ENCODE measurements at regions of chr3 and their contacts with region 1.

Region 1: GRCh38 chr3:140035871-140036270 is 100.9 kb downstream of the CLSTN2 start:
- DNase-seq: no peak
- ATAC-seq: no peak
- H3K4me3 ChIP-seq: no peak overlapping the region
- H3K27ac ChIP-seq: no peak overlapping the region
- H3K4me1 ChIP-seq: no peaks in the 10 kb centered on the region
- H3K27me3 ChIP-seq: peaks cover 55% of the 10 kb centered on the region
- CTCF ChIP-seq: no peak
- POLR2A ChIP-seq: no peak
- RAD21 ChIP-seq: no peak

Region 2: GRCh38 chr3:139718415-139718814 is 317.5 kb before region 1 on chr3:
- CTCF ChIA-PET with region 1: no interaction called
- POLR2A ChIA-PET with region 1: no interaction called
- RAD21 ChIA-PET with region 1: no interaction called
- intact Hi-C with region 1: loop called (anchors 10 kb)
- DNase-seq: peak; percentile 26
- ATAC-seq: peak; percentile 91
- H3K4me3 ChIP-seq: no peak overlapping the region
- H3K27ac ChIP-seq: no peak overlapping the region
- H3K4me1 ChIP-seq: no peaks in the 10 kb centered on the region
- H3K27me3 ChIP-seq: peaks cover 74% of the 10 kb centered on the region
- CTCF ChIP-seq: peak; percentile 12 to 67 (median 59); a peak in 4 of 6 replicates
- POLR2A ChIP-seq: no peak
- RAD21 ChIP-seq: peak; percentile 39

Region 3: GRCh38 chr3:140292684-140293083 is 256.8 kb after region 1 on chr3:
- CTCF ChIA-PET with region 1: no interaction called
- POLR2A ChIA-PET with region 1: no interaction called
- RAD21 ChIA-PET with region 1: no interaction called
- intact Hi-C with region 1: no loop called
- DNase-seq: no peak
- ATAC-seq: no peak
- H3K4me3 ChIP-seq: no peak overlapping the region
- H3K27ac ChIP-seq: no peak overlapping the region
- H3K4me1 ChIP-seq: no peaks in the 10 kb centered on the region
- H3K27me3 ChIP-seq: peaks cover 28% of the 10 kb centered on the region
- CTCF ChIP-seq: no peak
- POLR2A ChIP-seq: no peak
- RAD21 ChIP-seq: no peak

Measured in HCT116 (cell line).